Colonic mucosa (tissue), 4 donors: ENCODE measurements at regions of chr11 and their contacts with region 1.

Region 1: DNA sequence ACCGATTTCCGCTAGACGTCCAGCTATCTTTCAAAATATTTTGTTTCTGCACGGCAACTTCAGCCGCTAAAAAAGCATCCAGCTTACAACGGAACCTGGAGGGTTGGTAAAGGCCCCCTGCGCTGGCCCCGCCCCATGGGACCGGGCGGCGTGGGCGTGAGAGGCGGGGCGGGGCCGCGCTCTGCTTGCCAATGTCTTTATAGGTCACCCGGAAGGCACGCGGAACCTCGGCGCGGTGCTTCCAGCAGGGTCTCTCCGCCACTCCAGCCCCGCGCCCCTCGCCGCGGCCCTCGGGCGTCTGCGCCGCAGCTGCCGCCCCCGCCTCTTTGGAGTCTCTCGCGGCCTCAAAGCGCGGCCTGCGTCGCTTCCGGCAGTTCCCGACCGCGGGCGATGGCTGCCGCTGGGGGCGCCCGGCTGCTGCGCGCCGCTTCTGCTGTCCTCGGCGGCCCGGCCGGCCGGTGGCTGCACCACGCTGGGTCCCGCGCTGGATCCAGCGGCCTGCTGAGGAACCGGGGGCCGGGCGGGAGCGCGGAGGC is at the start of gene FDX1:
- DNase-seq: peak; percentile 86
- H3K4me3 ChIP-seq: peak within 1 kb of the TSS; percentile 82
- H3K27ac ChIP-seq: peak within 1 kb of the TSS; percentile 89
- H3K4me1 ChIP-seq: peaks cover 7% of the 10 kb centered on the region
- H3K27me3 ChIP-seq: no peaks in the 10 kb centered on the region
- CTCF ChIP-seq: peak; percentile 46
- total RNA-seq, gene FDX1: 19.0 to 23.7 TPM

Region 2: DNA sequence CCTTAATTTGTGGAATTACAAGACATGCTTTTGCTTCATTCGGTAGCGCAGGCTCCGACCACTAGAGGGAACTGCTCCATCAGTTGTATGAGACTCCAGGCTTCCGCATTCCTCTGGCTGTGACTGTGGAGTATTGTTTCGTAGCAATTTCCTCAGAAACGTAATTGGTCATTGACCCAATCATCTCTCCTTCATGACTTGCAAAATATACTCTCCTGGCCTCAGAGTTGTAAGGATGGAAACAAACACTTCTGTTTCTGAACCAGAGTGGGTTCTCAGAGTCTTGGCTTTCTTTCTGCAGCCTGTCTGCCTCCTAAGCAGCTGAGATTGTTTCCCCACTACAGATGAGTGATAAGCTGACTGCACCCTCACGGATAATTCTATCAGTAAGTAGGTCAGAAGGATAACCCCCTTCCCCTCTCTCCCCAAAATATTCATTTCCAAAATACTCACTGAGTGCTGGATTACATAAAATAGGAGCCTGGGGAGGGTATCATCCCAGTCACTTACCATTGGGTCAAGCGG is 483.4 kb before region 1 on chr11:
- intact Hi-C with region 1: loop called (anchors 10 kb)
- DNase-seq: peak; percentile 90
- H3K4me3 ChIP-seq: peak overlapping the region; percentile 10
- H3K27ac ChIP-seq: no peak overlapping the region
- H3K4me1 ChIP-seq: no peaks in the 10 kb centered on the region
- H3K27me3 ChIP-seq: no peaks in the 10 kb centered on the region
- CTCF ChIP-seq: peak; percentile 86

Region 3: GRCh38 chr11:110195845-110196754 is 233.7 kb before region 1 on chr11:
- intact Hi-C with region 1: loop called (anchors 2 kb)
- DNase-seq: no peak
- H3K4me3 ChIP-seq: no peak overlapping the region
- H3K27ac ChIP-seq: no peak overlapping the region
- H3K4me1 ChIP-seq: no peaks in the 10 kb centered on the region
- H3K27me3 ChIP-seq: no peaks in the 10 kb centered on the region
- CTCF ChIP-seq: no peak

Region 4: GRCh38 chr11:110296226-110297075 is 133.3 kb before region 1 on chr11 and contains the start of gene RDX:
- intact Hi-C with region 1: loop called (anchors 10 kb)
- DNase-seq: peak; percentile 54
- H3K4me3 ChIP-seq: peak within 1 kb of the TSS; percentile 73
- H3K27ac ChIP-seq: peak within 1 kb of the TSS; percentile 87
- H3K4me1 ChIP-seq: no peaks in the 10 kb centered on the region
- H3K27me3 ChIP-seq: peaks cover 14% of the 10 kb centered on the region
- CTCF ChIP-seq: no peak
- total RNA-seq, gene RDX: 17.9 to 20.5 TPM

Region 5: GRCh38 chr11:110376711-110377324 is 53.0 kb before region 1 on chr11:
- intact Hi-C with region 1: loop called (anchors 5 kb)
- DNase-seq: peak; percentile 71
- H3K4me3 ChIP-seq: no peak overlapping the region
- H3K27ac ChIP-seq: no peak overlapping the region
- H3K4me1 ChIP-seq: no peaks in the 10 kb centered on the region
- H3K27me3 ChIP-seq: no peaks in the 10 kb centered on the region
- CTCF ChIP-seq: peak; percentile 68